Right ventricle myocardium inferior (tissue), 1 donor: ENCODE measurements at regions of chr16 and their contacts with region 1.

Region 1: GRCh38 chr16:82368041-82368440 is 198.0 kb upstream of the MPHOSPH6 start:
- DNase-seq: peak; percentile 75
- ATAC-seq: peak; percentile 84

Region 2: DNA sequence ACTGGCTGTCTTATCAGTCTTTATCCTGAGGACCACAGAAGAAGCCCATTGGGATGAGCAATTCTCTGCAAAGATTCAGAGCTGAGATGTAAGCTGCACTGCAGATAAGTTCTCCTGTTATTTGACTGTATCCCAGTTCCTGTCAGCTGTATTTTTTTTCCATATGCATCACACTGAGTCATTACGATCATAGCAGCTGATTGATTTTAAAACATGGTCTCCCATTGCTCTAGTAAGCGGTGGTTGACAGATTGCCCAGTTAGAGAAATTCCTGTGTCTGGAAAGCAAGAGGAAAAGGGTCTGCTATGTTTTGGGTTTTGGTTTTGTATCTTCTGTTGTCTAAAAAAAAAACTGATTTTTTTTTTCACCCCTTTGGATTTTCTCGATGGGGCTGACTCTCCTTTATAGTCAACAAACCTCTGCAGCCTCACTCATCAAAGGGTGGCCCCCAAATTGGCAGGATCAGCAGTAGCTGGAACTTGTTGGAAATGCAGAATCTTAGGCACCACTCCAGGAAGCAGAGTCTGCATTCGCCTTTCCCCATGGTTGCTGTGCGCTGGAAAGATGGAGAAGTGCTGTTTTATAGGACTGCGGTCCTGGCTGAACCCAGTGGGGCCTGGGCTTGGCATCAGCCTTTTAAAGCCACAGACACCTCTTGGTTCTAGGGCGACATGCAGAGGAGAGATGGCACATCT is 22.1 kb after region 1 on chr16:
- intact Hi-C with region 1: no loop called
- DNase-seq: no peak
- ATAC-seq: no peak

Region 3: GRCh38 chr16:82621796-82622195 is 253.8 kb after region 1 on chr16:
- intact Hi-C with region 1: loop called (anchors 5 kb)
- DNase-seq: no peak
- ATAC-seq: peak; percentile 19